ENCODE measurements at regions of chr11 and their contacts with region 1.

Region 1: GRCh38 chr11:34926101-34926830 is 9.8 kb downstream of the PDHX start:
- DNase-seq: no peak
- ATAC-seq: peak in 7 of 8 donors; percentile 29 to 82 (median 64)
- H3K4me3 ChIP-seq: no peak overlapping the region
- H3K27ac ChIP-seq: peak overlapping the region in 1 of 10 donors; percentile 68
- H3K4me1 ChIP-seq: peaks cover 0 to 77% (median 38%) of the 10 kb centered on the region in 9 donors
- H3K27me3 ChIP-seq: no peaks in the 10 kb centered on the region
- CTCF ChIP-seq: peak; percentile 34 to 83 (median 72)

Region 2: DNA sequence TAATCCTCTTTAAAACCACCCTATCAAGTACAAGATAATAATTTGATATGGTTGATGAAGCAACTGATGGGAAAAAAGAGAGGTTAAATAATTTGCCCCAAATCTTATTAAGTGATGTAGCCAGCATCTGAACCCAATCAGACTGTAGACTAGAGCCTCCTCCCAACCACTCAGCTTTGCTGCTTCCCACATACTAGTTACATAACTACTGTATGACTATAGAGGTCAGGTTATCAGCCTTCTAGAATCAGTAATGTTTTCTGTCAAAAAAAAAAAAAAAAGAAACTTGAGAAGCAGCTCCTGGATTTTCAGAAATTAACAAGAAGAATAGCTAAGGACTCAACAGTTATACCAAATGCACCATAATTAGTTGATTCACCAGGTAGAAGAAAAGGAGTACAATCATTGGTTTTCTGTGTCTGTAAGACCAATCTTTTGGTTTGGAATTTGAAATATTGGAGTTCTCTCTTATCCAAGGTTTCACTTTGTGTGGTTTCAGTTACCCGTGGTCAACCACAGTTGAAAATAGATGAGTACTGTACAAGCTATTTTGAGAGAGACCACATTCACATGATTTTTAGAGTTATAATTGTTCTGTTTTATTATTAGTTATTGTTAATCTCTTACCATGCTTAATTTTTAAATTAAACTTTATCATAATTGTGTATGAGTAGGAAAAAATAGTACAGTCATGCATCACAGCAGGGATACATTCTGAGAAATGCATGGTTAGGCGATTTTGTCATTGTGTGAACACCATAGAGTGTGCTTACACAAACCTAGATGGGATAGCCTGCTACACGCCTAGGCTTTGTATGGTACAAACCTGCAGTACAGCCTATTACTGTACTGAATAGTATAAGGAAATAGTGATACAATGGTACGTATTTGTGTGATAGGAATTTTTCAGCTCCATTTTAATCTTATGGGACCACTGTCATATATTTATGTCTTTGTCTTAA is 62.3 kb after region 1 on chr11:
- intact Hi-C with region 1: loop called in 1 of 10 experiments (anchors 10 kb)
- DNase-seq: no peak
- ATAC-seq: no peak
- H3K4me3 ChIP-seq: no peak overlapping the region
- H3K27ac ChIP-seq: no peak overlapping the region
- H3K4me1 ChIP-seq: peaks cover 0 to 12% (median 0%) of the 10 kb centered on the region in 9 donors
- H3K27me3 ChIP-seq: no peaks in the 10 kb centered on the region
- CTCF ChIP-seq: no peak

Region 3: GRCh38 chr11:35237860-35238715 is 311.8 kb after region 1 on chr11:
- intact Hi-C with region 1: loop called in 7 of 10 experiments (anchors 2 to 10 kb)
- DNase-seq: peak in 1 of 2 donors; percentile 62
- ATAC-seq: peak in 4 of 8 donors; percentile 28 to 72 (median 48)
- H3K4me3 ChIP-seq: no peak overlapping the region
- H3K27ac ChIP-seq: peak overlapping the region in 1 of 10 donors; percentile 77
- H3K4me1 ChIP-seq: peaks cover 0 to 43% (median 0%) of the 10 kb centered on the region in 9 donors
- H3K27me3 ChIP-seq: no peaks in the 10 kb centered on the region
- CTCF ChIP-seq: peak; percentile 60 to 84 (median 75)

Region 4: GRCh38 chr11:35246745-35247144 is 320.5 kb after region 1 on chr11:
- intact Hi-C with region 1: loop called in 1 of 10 experiments (anchors 5 kb)
- DNase-seq: peak in 1 of 2 donors; percentile 60
- ATAC-seq: peak; percentile 55 to 96 (median 92)
- H3K4me3 ChIP-seq: no peak overlapping the region
- H3K27ac ChIP-seq: peak overlapping the region; percentile 8 to 88 (median 72)
- H3K4me1 ChIP-seq: peaks cover 0 to 34% (median 10%) of the 10 kb centered on the region in 9 donors
- H3K27me3 ChIP-seq: no peaks in the 10 kb centered on the region
- CTCF ChIP-seq: no peak

Region 5: GRCh38 chr11:35485656-35486322 is 559.5 kb after region 1 on chr11:
- intact Hi-C with region 1: loop called in 4 of 10 experiments (anchors 5 to 10 kb)
- DNase-seq: peak; percentile 65 to 68
- ATAC-seq: peak; percentile 75 to 90 (median 88)
- H3K4me3 ChIP-seq: no peak overlapping the region
- H3K27ac ChIP-seq: no peak overlapping the region
- H3K4me1 ChIP-seq: peaks cover 0 to 12% (median 0%) of the 10 kb centered on the region in 9 donors
- H3K27me3 ChIP-seq: peaks cover 0 to 15% (median 8%) of the 10 kb centered on the region in 7 donors
- CTCF ChIP-seq: peak; percentile 76 to 94 (median 90)

Measured in heart right ventricle (tissue), 16 donors.